ENCODE measurements at regions of chr2 and their contacts with region 1.

Region 1: GRCh38 chr2:70070541-70071268 is 16.6 kb upstream of the PCBP1 start:
- DNase-seq: peak; percentile 70
- H3K4me3 Mint-ChIP-seq: peak overlapping the region; percentile 63
- H3K27ac Mint-ChIP-seq: peak overlapping the region; percentile 88
- H3K4me1 Mint-ChIP-seq: peaks cover 47% of the 10 kb centered on the region
- H3K27me3 Mint-ChIP-seq: no peaks in the 10 kb centered on the region

Region 2: GRCh38 chr2:69946351-69947077 is 124.2 kb before region 1 on chr2:
- CTCF ChIA-PET with region 1: interaction called, 7 read pairs
- POLR2A ChIA-PET with region 1: interaction called, 23 read pairs
- DNase-seq: peak; percentile 80
- H3K4me3 Mint-ChIP-seq: peak overlapping the region; percentile 12
- H3K27ac Mint-ChIP-seq: peak overlapping the region; percentile 94
- H3K4me1 Mint-ChIP-seq: peaks cover 56% of the 10 kb centered on the region
- H3K27me3 Mint-ChIP-seq: peaks cover 2% of the 10 kb centered on the region

Region 3: GRCh38 chr2:70049255-70049654 is 21.4 kb before region 1 on chr2:
- CTCF ChIA-PET with region 1: interaction called, 49 read pairs
- POLR2A ChIA-PET with region 1: interaction called, 95 read pairs
- DNase-seq: no peak
- H3K4me3 Mint-ChIP-seq: no peak overlapping the region
- H3K27ac Mint-ChIP-seq: peak overlapping the region; percentile 38
- H3K4me1 Mint-ChIP-seq: peaks cover 52% of the 10 kb centered on the region
- H3K27me3 Mint-ChIP-seq: no peaks in the 10 kb centered on the region

Region 4: DNA sequence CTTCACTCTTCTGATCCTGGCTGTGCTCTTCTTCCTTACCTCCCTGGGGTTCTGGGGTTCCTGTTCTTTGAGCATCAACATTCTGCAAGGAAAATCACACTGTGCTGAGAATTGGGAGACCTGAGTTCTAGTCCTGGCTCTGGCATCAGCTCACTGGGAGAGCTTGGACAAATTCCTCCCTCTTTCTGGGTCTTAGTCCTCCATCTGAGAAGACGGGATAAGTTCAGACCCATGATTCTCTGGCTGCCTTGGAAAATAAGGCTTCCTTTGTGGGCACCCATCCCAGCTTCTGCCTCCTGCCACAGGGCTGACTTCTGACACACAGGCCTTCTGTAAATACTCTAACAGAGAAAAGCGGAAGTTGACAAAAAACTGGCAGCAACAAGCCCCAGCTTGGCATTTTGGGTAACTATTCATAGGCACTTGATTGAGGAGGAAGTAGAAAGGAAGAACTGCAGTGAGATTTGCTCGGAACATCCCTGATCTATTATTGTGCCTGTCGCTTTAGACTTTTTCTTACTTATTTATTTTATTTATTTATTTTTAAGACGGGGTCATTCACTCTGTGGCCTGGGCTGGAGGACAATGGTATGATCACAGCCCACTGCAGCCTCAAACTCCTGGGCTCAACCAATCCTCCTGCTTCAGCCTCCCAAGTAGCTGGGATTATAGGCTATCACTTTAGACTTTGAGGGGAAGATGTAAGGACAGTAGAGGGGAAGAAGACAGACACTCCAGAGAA is 24.4 kb after region 1 on chr2:
- CTCF ChIA-PET with region 1: interaction called, 3 read pairs
- POLR2A ChIA-PET with region 1: interaction called, 274 read pairs
- DNase-seq: peak; percentile 68
- H3K4me3 Mint-ChIP-seq: peak overlapping the region; percentile 68
- H3K27ac Mint-ChIP-seq: peak overlapping the region; percentile 87
- H3K4me1 Mint-ChIP-seq: peaks cover 54% of the 10 kb centered on the region
- H3K27me3 Mint-ChIP-seq: no peaks in the 10 kb centered on the region

Region 5: GRCh38 chr2:70132244-70133126 is 61.8 kb after region 1 on chr2:
- CTCF ChIA-PET with region 1: interaction called, 9 read pairs
- POLR2A ChIA-PET with region 1: interaction called, 24 read pairs
- DNase-seq: peak; percentile 53
- H3K4me3 Mint-ChIP-seq: peak overlapping the region; percentile 72
- H3K27ac Mint-ChIP-seq: peak overlapping the region; percentile 94
- H3K4me1 Mint-ChIP-seq: peaks cover 76% of the 10 kb centered on the region
- H3K27me3 Mint-ChIP-seq: no peaks in the 10 kb centered on the region

Region 6: GRCh38 chr2:70173520-70173919 is 102.8 kb after region 1 on chr2:
- CTCF ChIA-PET with region 1: no interaction called
- POLR2A ChIA-PET with region 1: no interaction called
- DNase-seq: no peak
- H3K4me3 Mint-ChIP-seq: no peak overlapping the region
- H3K27ac Mint-ChIP-seq: no peak overlapping the region
- H3K4me1 Mint-ChIP-seq: no peaks in the 10 kb centered on the region
- H3K27me3 Mint-ChIP-seq: no peaks in the 10 kb centered on the region

Region 7: DNA sequence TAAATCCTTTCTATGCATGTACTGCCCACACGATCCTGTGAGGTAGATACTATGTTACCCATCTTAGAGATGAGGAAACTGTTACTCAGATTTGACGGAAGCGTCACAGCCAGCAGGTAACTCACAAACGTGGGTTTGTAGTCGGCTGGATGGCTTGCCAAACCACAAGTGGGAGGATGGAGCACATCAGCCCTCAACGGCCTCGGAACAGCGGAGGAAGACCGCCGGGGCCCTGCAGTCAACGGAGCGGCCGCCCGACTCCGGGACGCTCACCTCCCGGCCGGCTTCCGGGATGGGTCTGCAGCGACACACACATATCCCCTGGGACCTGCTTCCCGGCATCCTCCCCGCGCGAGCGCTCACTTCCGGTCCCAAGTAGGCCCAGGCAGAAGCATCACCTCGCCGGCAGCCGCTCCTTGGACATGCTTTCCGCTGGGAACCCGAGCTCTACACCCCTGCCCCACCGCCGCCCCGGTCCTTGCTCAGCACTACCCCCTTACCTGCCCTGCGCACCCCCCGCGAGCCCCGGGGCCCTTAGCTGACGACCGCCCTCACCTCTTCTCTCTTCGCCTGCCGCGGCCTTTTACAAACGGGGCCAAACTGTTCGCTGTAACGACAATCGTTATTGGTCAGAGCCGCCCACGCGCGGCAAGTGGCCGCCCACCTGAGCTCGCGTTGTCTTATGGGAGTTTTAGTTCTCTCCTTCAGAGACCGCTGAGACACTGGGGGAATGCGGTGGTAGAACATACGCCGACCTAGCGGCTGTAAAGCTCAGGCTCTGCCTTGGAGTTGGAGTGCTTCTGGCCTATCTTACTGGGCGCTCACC is 119.9 kb after region 1 on chr2 and contains the start of gene C2orf42:
- CTCF ChIA-PET with region 1: interaction called, 5 read pairs
- POLR2A ChIA-PET with region 1: interaction called, 13 read pairs
- DNase-seq: peak; percentile 96
- H3K4me3 Mint-ChIP-seq: peak within 1 kb of the TSS; percentile 82
- H3K27ac Mint-ChIP-seq: peak within 1 kb of the TSS; percentile 87
- H3K4me1 Mint-ChIP-seq: peaks cover 23% of the 10 kb centered on the region
- H3K27me3 Mint-ChIP-seq: no peaks in the 10 kb centered on the region
- total RNA-seq, gene C2orf42: 28.8 to 32.2 TPM

Region 8: GRCh38 chr2:70258532-70258874 is 187.8 kb after region 1 on chr2:
- CTCF ChIA-PET with region 1: no interaction called
- POLR2A ChIA-PET with region 1: no interaction called
- DNase-seq: no peak
- H3K4me3 Mint-ChIP-seq: peak overlapping the region; percentile 82
- H3K27ac Mint-ChIP-seq: peak overlapping the region; percentile 58
- H3K4me1 Mint-ChIP-seq: peaks cover 24% of the 10 kb centered on the region
- H3K27me3 Mint-ChIP-seq: no peaks in the 10 kb centered on the region

Region 9: DNA sequence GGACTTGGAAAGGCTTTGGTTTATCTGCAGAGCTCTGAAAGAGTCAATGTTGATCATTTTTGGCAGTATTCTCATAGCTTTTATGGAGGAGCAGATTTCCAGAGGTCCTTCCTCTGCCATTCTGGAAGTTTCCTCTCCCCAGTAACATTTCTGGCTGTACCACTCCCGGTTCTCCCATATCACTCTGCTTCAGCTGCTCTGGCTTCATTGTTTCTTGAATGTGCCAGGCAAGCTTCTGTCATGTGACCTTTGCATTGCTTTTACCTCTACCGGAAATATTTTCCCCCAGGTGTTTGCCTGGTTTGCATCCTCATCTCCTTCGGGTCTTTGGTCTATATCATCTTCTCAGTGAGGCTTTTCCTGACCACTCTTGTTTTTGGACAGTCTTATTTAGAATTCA is 199.6 kb after region 1 on chr2:
- CTCF ChIA-PET with region 1: no interaction called
- POLR2A ChIA-PET with region 1: no interaction called
- DNase-seq: no peak
- H3K4me3 Mint-ChIP-seq: no peak overlapping the region
- H3K27ac Mint-ChIP-seq: no peak overlapping the region
- H3K4me1 Mint-ChIP-seq: peaks cover 1% of the 10 kb centered on the region
- H3K27me3 Mint-ChIP-seq: no peaks in the 10 kb centered on the region

Measured in activated CD4-positive, alpha-beta memory T cell treated with anti-CD3 and anti-CD28 coated beads, Interleukin-2, amount 10 ng/mL, durations not matched to agents 7 days and 5 days (primary cell).